CD14-positive monocyte (primary cell): ENCODE measurements at regions of chr15 and their contacts with region 1.

Region 1: DNA sequence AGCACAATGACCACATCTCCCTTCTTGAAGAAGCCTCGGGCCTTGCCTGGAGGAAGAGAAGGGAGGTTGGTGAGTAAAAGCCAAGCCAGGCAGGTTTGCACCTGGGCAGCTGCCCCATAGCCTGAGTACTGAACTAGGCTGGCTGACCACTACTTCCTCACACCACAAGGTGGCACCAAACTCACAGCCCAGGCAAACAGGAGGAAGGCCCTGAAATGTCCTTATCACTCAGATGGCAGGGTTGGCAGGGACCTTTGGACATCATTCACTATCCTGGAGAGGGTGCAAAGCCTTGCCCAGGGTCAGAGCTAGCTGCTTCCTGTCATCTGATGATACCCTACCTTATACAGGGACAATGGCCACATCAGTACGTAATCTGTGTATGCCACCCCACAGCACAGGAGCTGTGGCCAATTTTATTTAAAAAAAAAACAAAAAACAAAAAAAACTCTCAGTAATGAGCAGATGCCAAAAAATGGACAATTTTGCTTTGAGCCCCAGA is 2.2 kb upstream of the GRAMD2A start:
- DNase-seq: peak; percentile 69 to 75 (median 71)
- H3K4me3 ChIP-seq: no peak overlapping the region
- H3K4me3 Mint-ChIP-seq: no peak overlapping the region
- H3K27ac ChIP-seq: peak overlapping the region in 1 of 2 donors; percentile 62
- H3K27ac Mint-ChIP-seq: peak overlapping the region in 4 of 7 donors; percentile 2 to 87 (median 60)
- H3K4me1 ChIP-seq: peaks cover 24 to 33% of the 10 kb centered on the region in 2 donors
- H3K4me1 Mint-ChIP-seq: peaks cover 31% of the 10 kb centered on the region
- H3K27me3 ChIP-seq: peaks cover 3 to 24% of the 10 kb centered on the region in 2 donors
- H3K27me3 Mint-ChIP-seq: peaks cover 24 to 32% (median 26%) of the 10 kb centered on the region in 3 donors
- CTCF ChIP-seq: peak; percentile 92

Region 2: GRCh38 chr15:72117486-72118399 is 82.0 kb before region 1 on chr15 and contains the start of gene MYO9A:
- intact Hi-C with region 1: loop called in 1 of 2 experiments (anchors 10 kb)
- DNase-seq: peak; percentile 98 to 99 (median 98)
- H3K4me3 ChIP-seq: peak within 1 kb of the TSS; percentile 78 to 87 (median 86)
- H3K4me3 Mint-ChIP-seq: peak within 1 kb of the TSS; percentile 95 to 99
- H3K27ac ChIP-seq: peak within 1 kb of the TSS; percentile 91 to 97
- H3K27ac Mint-ChIP-seq: peak within 1 kb of the TSS; percentile 98 to 100 (median 100)
- H3K4me1 ChIP-seq: peaks cover 16 to 25% of the 10 kb centered on the region in 2 donors
- H3K4me1 Mint-ChIP-seq: peaks cover 24% of the 10 kb centered on the region
- H3K27me3 ChIP-seq: no peaks in the 10 kb centered on the region
- H3K27me3 Mint-ChIP-seq: peaks cover 3% of the 10 kb centered on the region in 3 donors
- CTCF ChIP-seq: no peak
- polyA plus RNA-seq, gene MYO9A: 3.9 to 6.6 (median 5.0) TPM

Region 3: DNA sequence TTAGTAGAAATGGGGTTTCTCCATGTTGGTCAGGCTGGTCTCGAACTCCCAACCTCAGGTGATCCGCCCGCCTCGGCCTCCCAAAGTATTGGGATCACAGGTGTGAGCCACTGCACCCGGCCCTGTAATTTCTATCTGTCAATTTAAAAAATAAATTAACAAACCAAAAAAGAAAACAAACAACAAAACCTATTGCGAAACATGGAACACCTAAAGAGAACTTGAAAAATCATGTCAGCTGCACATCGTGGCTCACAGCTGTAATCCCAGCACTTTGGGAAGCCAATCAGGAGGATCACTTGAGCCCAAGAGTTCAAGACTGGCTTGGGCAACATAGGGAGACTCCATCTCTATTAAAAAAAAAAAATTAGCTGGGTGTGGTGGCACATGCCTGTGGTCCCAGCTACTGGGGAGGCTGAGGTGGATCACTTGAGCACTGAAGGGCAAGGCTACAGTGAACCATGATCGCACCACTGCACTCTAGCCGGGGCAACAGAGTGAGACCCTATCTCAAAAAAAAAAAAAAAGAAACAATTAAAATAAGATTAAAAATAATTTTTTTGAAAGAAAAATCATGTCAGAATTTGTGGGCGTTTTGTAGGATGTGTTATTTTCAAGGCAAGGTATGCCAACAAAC is 53.0 kb after region 1 on chr15:
- intact Hi-C with region 1: loop called in 1 of 2 experiments (anchors 10 kb)
- DNase-seq: no peak
- H3K4me3 ChIP-seq: no peak overlapping the region
- H3K4me3 Mint-ChIP-seq: no peak overlapping the region
- H3K27ac ChIP-seq: no peak overlapping the region
- H3K27ac Mint-ChIP-seq: no peak overlapping the region
- H3K4me1 ChIP-seq: peaks cover 9 to 13% of the 10 kb centered on the region in 2 donors
- H3K4me1 Mint-ChIP-seq: peaks cover 11% of the 10 kb centered on the region
- H3K27me3 ChIP-seq: no peaks in the 10 kb centered on the region
- H3K27me3 Mint-ChIP-seq: peaks cover 0 to 3% (median 0%) of the 10 kb centered on the region in 3 donors
- CTCF ChIP-seq: no peak

Region 4: DNA sequence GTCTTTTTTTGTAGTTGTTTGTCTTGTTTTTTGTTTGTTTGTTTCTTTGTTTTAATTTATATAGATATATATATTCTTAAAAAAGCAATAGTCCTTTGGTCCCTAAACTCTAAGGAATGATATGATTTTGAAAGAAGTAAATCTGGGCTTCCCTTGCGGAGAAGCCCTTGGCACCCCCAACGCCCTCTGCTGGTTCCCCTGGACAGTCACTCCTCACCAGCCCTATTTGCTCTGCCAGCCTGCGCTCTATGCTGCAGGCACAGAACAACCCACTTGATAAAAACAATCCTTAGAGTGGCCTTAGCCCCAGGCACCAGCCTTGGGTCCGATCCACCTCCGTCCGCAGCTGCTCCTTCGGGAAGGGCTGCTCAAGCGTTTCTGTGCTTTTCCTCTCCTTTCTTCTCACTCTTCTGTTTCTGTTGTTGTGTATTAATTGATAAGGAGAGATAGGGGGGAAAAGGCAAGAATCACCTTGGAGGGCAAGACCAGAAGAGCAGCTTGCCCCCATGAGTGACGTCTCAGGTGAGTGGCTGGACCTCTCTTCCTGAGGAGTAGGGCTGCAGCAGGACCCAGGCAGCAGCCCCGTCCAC is 86.3 kb after region 1 on chr15:
- intact Hi-C with region 1: loop called (anchors 2 to 5 kb)
- DNase-seq: peak; percentile 27 to 56 (median 49)
- H3K4me3 ChIP-seq: no peak overlapping the region
- H3K4me3 Mint-ChIP-seq: no peak overlapping the region
- H3K27ac ChIP-seq: no peak overlapping the region
- H3K27ac Mint-ChIP-seq: peak overlapping the region in 1 of 7 donors; percentile 73
- H3K4me1 ChIP-seq: no peaks in the 10 kb centered on the region
- H3K4me1 Mint-ChIP-seq: no peaks in the 10 kb centered on the region
- H3K27me3 ChIP-seq: no peaks in the 10 kb centered on the region
- H3K27me3 Mint-ChIP-seq: peaks cover 0 to 1% (median 0%) of the 10 kb centered on the region in 3 donors
- CTCF ChIP-seq: peak; percentile 71

Region 5: DNA sequence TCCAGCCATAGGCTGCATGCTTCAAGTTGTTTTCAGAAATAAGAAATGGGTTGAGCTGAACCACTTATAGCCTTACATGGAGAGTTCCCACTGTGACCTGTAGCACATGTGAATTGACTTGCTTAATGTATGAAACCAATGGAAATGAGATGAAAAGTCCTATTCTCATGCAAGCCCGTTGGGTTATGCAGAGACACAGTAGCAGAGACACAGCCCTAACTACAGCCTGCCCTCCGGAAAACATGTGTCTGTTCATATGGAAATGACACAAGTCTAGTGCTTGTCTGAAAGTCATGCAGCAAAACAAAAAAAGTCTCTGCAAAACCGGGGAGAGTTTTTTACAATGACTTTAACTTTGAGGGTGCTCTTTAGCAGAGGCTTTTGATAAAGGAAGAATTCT is 471.8 kb after region 1 on chr15:
- intact Hi-C with region 1: loop called in 1 of 2 experiments (anchors 10 kb)
- DNase-seq: no peak
- H3K4me3 ChIP-seq: no peak overlapping the region
- H3K4me3 Mint-ChIP-seq: peak overlapping the region in 1 of 2 donors; percentile 15
- H3K27ac ChIP-seq: no peak overlapping the region
- H3K27ac Mint-ChIP-seq: no peak overlapping the region
- H3K4me1 ChIP-seq: no peaks in the 10 kb centered on the region
- H3K4me1 Mint-ChIP-seq: peaks cover 7% of the 10 kb centered on the region
- H3K27me3 ChIP-seq: peaks cover 2% of the 10 kb centered on the region in 2 donors
- H3K27me3 Mint-ChIP-seq: peaks cover 10 to 15% (median 11%) of the 10 kb centered on the region in 3 donors
- CTCF ChIP-seq: no peak